PC-3 (cell line): ENCODE measurements at regions of chr1 and their contacts with region 1.

Region 1: GRCh38 chr1:91885716-91886506 is at the start of gene TGFBR3:
- DNase-seq: peak; percentile 70
- ATAC-seq: peak; percentile 68
- H3K4me3 ChIP-seq: peak within 1 kb of the TSS; percentile 90
- H3K27ac ChIP-seq: 0 out of 2 replicates have a peak within 1 kb of the TSS, but pooled peaks have one; percentile 3
- H3K4me1 ChIP-seq: peaks cover 23% of the 10 kb centered on the region
- H3K27me3 ChIP-seq: no peaks in the 10 kb centered on the region
- CTCF ChIP-seq: peak; percentile 45; the same call in 1 of the 2 replicates
- total RNA-seq, gene TGFBR3: 2.8 and 3.0 TPM in 2 replicates

Region 2: GRCh38 chr1:91529856-91530255 is 356.1 kb before region 1 on chr1:
- CTCF ChIA-PET with region 1: no interaction called
- POLR2A ChIA-PET with region 1: no interaction called
- intact Hi-C with region 1: loop called (anchors 5 kb)
- DNase-seq: peak; percentile 58
- ATAC-seq: peak; percentile 73
- H3K4me3 ChIP-seq: no peak overlapping the region
- H3K27ac ChIP-seq: no peak overlapping the region
- H3K4me1 ChIP-seq: no peaks in the 10 kb centered on the region
- H3K27me3 ChIP-seq: no peaks in the 10 kb centered on the region
- CTCF ChIP-seq: peak; percentile 71

Region 3: DNA sequence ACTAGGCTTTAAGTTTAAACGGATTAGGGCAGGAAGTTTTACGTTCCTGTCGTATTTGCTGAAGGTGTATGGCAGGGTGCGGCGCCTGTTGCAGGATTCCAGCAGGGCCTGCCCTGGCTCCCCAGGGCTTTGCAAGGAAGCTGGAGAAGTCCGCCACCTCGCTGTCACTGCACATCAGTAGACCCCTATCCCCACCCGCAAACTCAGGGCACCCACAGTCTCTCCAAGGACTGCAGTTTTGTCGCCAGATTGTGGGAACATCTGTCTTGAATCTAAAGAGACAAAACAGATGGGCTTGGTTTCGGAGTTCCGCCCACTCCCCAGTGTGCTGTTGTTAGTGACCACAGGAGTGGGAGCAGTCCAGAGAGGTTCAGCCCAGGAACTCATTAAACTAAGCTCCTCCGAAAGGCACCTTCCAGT is 274.4 kb before region 1 on chr1:
- CTCF ChIA-PET with region 1: interaction called, 3 read pairs
- POLR2A ChIA-PET with region 1: no interaction called
- intact Hi-C with region 1: loop called (anchors 2 kb)
- DNase-seq: peak; percentile 72
- ATAC-seq: peak; percentile 61
- H3K4me3 ChIP-seq: no peak overlapping the region
- H3K27ac ChIP-seq: peak overlapping the region; percentile 80
- H3K4me1 ChIP-seq: peaks cover 55% of the 10 kb centered on the region
- H3K27me3 ChIP-seq: no peaks in the 10 kb centered on the region
- CTCF ChIP-seq: no peak

Region 4: DNA sequence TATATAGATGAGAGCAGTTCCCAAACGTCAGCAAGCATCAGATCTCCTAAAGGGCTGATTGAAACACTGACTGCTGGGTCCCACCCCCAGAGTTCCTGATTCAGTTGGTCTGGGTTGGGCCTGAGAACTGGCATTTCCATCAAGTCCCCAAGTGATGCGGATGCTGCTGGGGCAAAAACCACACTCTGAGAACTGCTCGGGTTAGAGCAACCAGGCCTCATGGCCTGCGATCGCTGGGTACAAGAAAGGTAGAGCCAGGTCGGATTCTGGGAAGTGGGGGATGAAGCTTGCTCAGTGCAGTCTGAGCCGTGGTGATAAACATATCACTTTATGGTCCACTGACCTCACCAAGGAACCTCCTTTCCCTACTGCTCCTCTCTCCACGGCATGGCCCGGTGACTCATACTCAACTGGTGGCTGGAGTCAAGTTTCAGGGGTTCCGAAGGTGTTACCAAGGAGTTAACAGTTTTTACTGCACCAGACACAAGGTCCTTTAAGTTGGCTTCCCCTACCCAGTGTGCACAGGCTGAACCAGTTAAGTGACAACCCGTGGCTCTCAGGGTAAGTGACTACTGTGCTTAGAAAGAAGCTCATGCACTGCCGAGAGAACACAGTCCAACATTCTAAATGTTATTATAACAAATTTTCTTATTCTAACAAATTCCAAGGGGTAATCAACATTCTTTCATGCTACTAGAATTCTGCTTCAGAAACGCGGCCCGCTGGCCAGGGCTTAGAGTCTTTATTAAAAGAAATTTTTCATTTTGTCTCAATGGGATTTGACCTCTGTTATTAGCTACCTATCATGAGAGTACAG is 153.4 kb before region 1 on chr1:
- CTCF ChIA-PET with region 1: interaction called, 6 read pairs
- POLR2A ChIA-PET with region 1: interaction called, 3 read pairs
- intact Hi-C with region 1: loop called (anchors 2 kb)
- DNase-seq: peak; percentile 89
- ATAC-seq: peak; percentile 66
- H3K4me3 ChIP-seq: no peak overlapping the region; the same call in 1 of the 2 replicates
- H3K27ac ChIP-seq: peak overlapping the region; percentile 72
- H3K4me1 ChIP-seq: peaks cover 51% of the 10 kb centered on the region
- H3K27me3 ChIP-seq: no peaks in the 10 kb centered on the region
- CTCF ChIP-seq: no peak

Region 5: GRCh38 chr1:91846007-91846617 is 39.8 kb before region 1 on chr1:
- CTCF ChIA-PET with region 1: interaction called, 6 read pairs
- POLR2A ChIA-PET with region 1: no interaction called
- intact Hi-C with region 1: loop called (anchors 2 kb)
- DNase-seq: peak; percentile 59
- ATAC-seq: peak; percentile 4; the same call in 1 of the 2 replicates
- H3K4me3 ChIP-seq: no peak overlapping the region
- H3K27ac ChIP-seq: peak overlapping the region; percentile 69; the same call in 1 of the 2 replicates
- H3K4me1 ChIP-seq: peaks cover 30% of the 10 kb centered on the region
- H3K27me3 ChIP-seq: no peaks in the 10 kb centered on the region
- CTCF ChIP-seq: no peak